Right ventricle myocardium inferior (tissue), 1 donor: ENCODE measurements at regions of chr2 and their contacts with region 1.

Region 1: GRCh38 chr2:11129598-11130449 is 25.4 kb upstream of the SLC66A3 start:
- DNase-seq: no peak
- ATAC-seq: peak; percentile 43

Region 2: DNA sequence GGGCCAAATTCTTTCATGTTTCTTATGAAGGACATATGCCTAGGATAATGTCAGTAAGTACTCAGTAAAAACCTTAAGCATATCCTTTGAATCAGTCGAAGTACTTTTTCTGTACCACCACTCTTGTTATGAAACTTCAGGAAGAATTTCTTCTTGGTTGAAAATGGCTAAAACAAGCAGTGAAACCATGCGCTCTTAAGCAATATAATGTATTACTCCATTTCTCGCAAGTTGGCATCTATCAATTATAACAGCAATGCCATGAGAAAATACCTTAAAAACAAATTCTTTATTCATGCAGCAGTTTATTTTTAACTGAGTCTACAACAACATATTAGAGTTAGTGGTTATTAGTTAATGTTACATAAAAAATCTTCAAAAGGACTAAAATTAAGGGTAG is 66.4 kb after region 1 on chr2:
- intact Hi-C with region 1: loop called (anchors 10 kb)
- DNase-seq: no peak
- ATAC-seq: no peak

Region 3: DNA sequence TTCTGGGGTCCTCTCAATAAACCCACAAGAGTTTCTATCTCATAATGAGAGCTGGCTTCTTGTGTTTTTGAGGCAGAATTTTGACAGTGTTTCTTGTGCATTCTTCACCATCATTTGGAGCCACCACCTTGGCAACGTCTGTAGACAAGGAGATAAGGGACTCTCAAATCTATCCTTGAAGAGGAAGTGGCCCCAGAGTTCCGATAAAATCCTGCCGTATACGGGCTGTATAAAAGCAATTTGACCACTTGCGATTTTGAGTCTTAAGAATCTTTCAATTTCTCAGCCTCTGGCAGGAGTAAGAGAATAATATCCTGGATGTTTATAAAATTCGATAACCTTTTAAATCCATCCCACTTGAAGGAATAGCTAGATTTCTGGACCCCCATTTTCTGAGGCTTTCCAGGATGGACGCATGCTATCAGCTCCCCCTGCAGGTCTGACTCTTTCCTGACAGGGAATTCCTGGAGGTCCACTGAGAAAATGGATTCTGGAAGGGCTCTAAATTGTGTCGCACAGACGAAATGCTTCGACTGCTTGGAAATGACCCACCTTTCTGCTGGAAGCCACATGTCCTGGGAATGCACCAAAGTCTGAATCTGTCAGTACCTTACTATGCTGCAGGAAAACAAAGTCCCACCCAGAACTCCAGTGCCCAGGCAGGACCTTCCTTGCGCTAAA is 282.1 kb after region 1 on chr2:
- intact Hi-C with region 1: loop called (anchors 5 kb)
- DNase-seq: no peak
- ATAC-seq: peak; percentile 62

Region 4: DNA sequence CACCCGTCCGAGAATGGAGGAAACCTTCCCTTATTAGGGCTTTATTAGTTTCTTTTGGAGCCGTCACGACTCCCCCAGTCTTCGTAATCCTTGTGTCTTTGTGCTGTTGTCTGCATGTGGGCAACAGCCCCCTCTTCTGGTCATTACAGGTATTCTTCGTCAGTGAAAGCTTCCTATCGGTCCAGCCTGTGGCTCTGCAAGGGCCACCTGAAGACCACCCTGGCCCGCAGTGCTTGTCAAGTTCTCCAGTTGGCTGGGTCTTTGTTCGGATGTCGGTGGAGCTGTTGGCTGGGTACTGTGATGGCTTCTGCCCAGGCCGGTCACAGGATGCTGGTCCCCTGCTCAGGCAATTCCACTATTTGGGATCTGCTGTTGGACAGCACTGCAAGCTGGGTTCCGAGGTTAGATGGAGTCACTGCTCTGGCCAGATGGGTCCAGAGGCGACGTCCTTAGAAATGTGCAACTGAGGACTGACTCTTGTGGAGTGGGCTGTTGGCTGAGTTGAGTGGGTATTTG is 317.0 kb after region 1 on chr2:
- intact Hi-C with region 1: loop called (anchors 10 kb)
- DNase-seq: no peak
- ATAC-seq: peak; percentile 62

Region 5: DNA sequence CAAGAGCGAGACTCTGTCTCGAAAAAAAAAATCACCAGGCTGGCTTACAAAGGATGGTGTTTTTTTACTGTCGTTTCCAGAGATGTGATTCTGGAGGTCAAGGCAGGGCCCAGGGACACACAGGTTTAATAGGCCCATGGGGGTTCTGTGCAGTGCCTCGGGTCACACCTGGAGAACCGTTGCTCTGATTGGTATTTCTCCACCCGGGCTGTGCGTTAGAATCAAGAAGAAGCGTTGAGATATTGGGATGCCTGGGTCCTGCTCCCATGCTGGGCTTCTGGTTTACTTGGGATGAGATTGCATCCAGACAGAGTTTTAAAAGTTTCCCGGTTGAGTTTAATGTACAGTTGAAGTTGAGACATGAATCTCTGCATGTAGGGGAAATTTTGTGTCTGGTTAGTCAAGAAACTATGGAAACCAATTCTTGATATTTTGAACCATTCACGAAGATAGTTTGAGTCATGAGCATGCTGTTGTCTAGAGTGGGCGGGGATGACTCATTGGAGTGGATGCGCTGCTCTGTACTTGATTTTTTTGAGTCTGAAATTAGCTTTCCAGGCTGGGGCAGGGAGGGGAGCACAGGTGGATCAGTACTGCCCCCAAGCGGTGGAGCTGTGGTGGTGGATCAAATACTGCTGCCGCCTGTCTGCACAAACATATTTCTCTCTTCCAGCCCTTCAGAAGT is 454.2 kb after region 1 on chr2:
- intact Hi-C with region 1: loop called (anchors 5 kb)
- DNase-seq: no peak
- ATAC-seq: peak; percentile 72